Dendritic cell treated with granulocyte-macrophage colony-stimulating factor and Interleukin-4, amounts not matched to agents 40 ng/mL and 50 ng/mL, for 4 days (primary cell): ENCODE measurements at regions of chr9 and their contacts with region 1.

Region 1: DNA sequence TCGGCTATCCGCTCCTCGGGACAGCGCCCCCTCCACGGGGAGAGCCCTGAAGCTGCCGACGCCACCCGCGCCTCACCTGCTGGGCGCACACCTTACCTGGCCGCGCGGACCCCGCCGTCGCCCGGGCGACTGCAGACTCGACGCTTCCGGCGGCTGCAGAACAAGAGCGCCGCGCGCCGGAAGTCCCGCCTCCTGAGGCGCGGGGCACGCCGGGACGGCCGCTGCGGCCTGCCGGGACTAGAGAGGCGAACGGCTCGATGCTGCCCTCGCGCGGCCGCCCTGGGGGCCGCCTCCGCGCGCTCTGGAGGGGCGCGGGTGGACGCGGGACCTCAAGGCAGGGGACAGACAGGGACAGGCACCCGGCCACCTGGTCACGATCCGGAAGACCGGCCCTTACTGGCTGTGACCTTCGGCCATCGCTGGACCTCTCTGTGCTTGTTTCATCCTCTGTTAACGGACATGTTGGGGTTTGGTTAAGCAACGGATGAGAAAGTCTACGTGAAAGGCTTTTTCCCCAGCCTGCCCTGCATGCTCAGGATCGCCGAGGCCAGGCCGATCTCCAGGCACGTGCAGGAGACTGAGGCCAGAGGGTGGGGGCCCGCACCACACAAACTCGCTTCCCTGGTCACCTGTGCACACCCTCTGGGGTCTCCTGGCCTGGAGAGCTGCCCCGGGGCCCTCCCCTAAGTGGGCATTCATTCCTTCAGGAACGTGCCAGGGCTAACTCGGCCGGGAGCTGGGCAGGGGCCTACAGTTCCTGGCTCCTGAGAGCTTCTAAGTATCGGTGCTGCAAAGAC is at the start of gene SNAPC4:
- H3K4me3 Mint-ChIP-seq: peak within 1 kb of the TSS; percentile 86
- H3K27ac Mint-ChIP-seq: peak within 1 kb of the TSS; percentile 62
- H3K4me1 Mint-ChIP-seq: peaks cover 34% of the 10 kb centered on the region
- H3K27me3 Mint-ChIP-seq: no peaks in the 10 kb centered on the region

Region 2: GRCh38 chr9:136339173-136339957 is 60.9 kb before region 1 on chr9:
- intact Hi-C with region 1: loop called (anchors 2 kb)
- H3K4me3 Mint-ChIP-seq: no peak overlapping the region
- H3K27ac Mint-ChIP-seq: no peak overlapping the region
- H3K4me1 Mint-ChIP-seq: peaks cover 12% of the 10 kb centered on the region
- H3K27me3 Mint-ChIP-seq: peaks cover 2% of the 10 kb centered on the region

Region 3: GRCh38 chr9:136363606-136364370 is 36.4 kb before region 1 on chr9 and contains the start of gene DNLZ:
- intact Hi-C with region 1: loop called (anchors 2 kb)
- H3K4me3 Mint-ChIP-seq: peak within 1 kb of the TSS; percentile 81
- H3K27ac Mint-ChIP-seq: peak within 1 kb of the TSS; percentile 81
- H3K4me1 Mint-ChIP-seq: peaks cover 58% of the 10 kb centered on the region
- H3K27me3 Mint-ChIP-seq: no peaks in the 10 kb centered on the region

Region 4: DNA sequence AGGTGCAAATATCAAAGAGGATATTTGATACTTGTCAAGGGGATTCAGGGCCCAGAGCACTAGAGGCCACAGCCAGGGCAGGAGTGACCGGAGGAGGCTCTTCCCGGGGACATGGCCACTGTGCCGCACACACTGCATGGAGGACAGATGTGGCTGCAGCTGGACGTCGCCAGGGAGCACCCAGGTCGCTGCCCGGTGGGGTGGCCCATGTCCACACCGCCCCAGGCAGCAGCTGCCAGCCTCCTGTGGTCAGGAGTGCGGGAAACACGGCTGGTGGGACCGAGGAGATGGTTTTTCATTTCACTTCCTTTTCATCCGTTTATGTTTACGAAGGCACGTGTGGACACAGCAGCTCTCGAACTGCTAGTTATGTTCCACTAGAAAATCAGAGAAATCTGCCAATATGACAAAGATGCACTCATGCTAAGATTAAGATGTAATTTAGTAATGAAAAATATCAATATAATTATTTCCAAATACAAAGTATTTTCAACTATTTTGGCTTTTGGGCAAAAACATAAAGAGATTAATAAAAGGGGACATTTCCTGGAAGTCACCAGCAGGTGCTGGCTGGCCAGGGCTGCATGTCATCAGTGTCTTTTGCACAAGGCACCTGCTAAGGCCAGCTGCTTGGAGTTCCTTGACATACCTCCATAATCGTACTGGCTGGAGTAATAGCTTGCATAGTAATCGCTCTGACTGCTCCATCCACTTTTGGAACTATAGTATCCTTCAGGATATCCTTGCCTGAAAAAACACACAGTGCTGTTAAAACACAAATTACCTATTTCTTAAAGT is 67.7 kb after region 1 on chr9:
- intact Hi-C with region 1: no loop called
- H3K4me3 Mint-ChIP-seq: no peak overlapping the region
- H3K27ac Mint-ChIP-seq: no peak overlapping the region
- H3K4me1 Mint-ChIP-seq: no peaks in the 10 kb centered on the region
- H3K27me3 Mint-ChIP-seq: no peaks in the 10 kb centered on the region

Region 5: GRCh38 chr9:136631038-136632000 is 231.1 kb after region 1 on chr9:
- intact Hi-C with region 1: no loop called
- H3K4me3 Mint-ChIP-seq: no peak overlapping the region
- H3K27ac Mint-ChIP-seq: no peak overlapping the region
- H3K4me1 Mint-ChIP-seq: peaks cover 5% of the 10 kb centered on the region
- H3K27me3 Mint-ChIP-seq: peaks cover 43% of the 10 kb centered on the region